ENCODE measurements at regions of chr22 and their contacts with region 1.

Region 1: GRCh38 chr22:25014896-25015755 is 62.6 kb downstream of the KIAA1671 start:
- DNase-seq: no peak
- ATAC-seq: no peak
- H3K4me3 ChIP-seq: no peak overlapping the region
- H3K4me3 Mint-ChIP-seq: no peak overlapping the region
- H3K27ac ChIP-seq: no peak overlapping the region
- H3K27ac Mint-ChIP-seq: no peak overlapping the region
- H3K4me1 ChIP-seq: no peaks in the 10 kb centered on the region
- H3K4me1 Mint-ChIP-seq: no peaks in the 10 kb centered on the region
- H3K27me3 ChIP-seq: peaks cover 0 to 4% of the 10 kb centered on the region in 2 experiments
- H3K27me3 Mint-ChIP-seq: peaks cover 9% of the 10 kb centered on the region
- CTCF ChIP-seq: no peak

Region 2: GRCh38 chr22:24969560-24970301 is 45.4 kb before region 1 on chr22:
- CTCF ChIA-PET with region 1: no interaction called
- POLR2A ChIA-PET with region 1: no interaction called
- intact Hi-C with region 1: loop called in 1 of 2 experiments (anchors 5 kb)
- DNase-seq: no peak
- ATAC-seq: no peak
- H3K4me3 ChIP-seq: no peak overlapping the region
- H3K4me3 Mint-ChIP-seq: no peak overlapping the region
- H3K27ac ChIP-seq: no peak overlapping the region
- H3K27ac Mint-ChIP-seq: no peak overlapping the region
- H3K4me1 ChIP-seq: no peaks in the 10 kb centered on the region
- H3K4me1 Mint-ChIP-seq: no peaks in the 10 kb centered on the region
- H3K27me3 ChIP-seq: no peaks in the 10 kb centered on the region
- H3K27me3 Mint-ChIP-seq: no peaks in the 10 kb centered on the region
- CTCF ChIP-seq: no peak

Region 3: DNA sequence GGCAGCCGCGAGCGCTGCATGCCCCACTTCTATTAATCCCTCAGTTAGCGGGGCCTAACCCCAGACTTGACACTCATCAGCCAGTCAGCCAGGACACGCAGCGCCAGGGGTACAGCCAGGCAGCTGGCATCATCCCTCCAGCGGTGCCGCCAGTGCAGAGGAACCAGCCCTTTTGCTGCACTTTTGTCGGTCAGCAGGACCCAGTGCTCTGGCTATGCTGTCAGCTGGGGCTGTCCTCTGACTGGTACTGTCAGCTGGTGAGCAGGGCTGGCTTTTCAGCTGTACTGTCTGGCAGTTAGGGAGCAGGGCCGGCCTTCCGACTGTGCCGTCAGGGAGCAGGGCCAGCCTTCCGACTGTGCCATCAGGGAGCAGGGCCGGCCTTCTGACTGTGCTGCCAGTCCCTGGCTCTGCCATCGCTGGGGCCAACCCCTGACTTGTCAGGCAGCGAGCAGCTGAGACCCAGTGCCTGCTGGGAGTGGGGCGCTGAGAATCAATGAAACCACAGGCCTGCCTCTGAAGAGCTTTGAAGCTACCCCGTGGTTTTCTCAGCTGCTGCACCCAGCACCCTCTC is 52.8 kb after region 1 on chr22:
- CTCF ChIA-PET with region 1: no interaction called
- POLR2A ChIA-PET with region 1: no interaction called
- intact Hi-C with region 1: no loop called
- DNase-seq: peak; percentile 75 to 97 (median 86)
- ATAC-seq: peak; percentile 83
- H3K4me3 ChIP-seq: peak overlapping the region; percentile 29
- H3K4me3 Mint-ChIP-seq: peak overlapping the region; percentile 73
- H3K27ac ChIP-seq: peak overlapping the region; percentile 83 to 90
- H3K27ac Mint-ChIP-seq: peak overlapping the region; percentile 96
- H3K4me1 ChIP-seq: peaks cover 93% of the 10 kb centered on the region
- H3K4me1 Mint-ChIP-seq: peaks cover 81% of the 10 kb centered on the region
- H3K27me3 ChIP-seq: no peaks in the 10 kb centered on the region
- H3K27me3 Mint-ChIP-seq: no peaks in the 10 kb centered on the region
- CTCF ChIP-seq: no peak

Measured in CD4-positive, alpha-beta T cell (primary cell).